Activated T-helper 2 cell treated with anti-CD3 and anti-CD28 coated beads, Interferon-gamma antibody, Interleukin-2, Interleukin-4, amounts not matched to agents 10 μg/mL and 5 μg/mL and 100 μg/mL, durations not matched to agents 14 hours and 24 hours and 36 hours (primary cell): ENCODE measurements at regions of chr17 and their contacts with region 1.

Region 1: DNA sequence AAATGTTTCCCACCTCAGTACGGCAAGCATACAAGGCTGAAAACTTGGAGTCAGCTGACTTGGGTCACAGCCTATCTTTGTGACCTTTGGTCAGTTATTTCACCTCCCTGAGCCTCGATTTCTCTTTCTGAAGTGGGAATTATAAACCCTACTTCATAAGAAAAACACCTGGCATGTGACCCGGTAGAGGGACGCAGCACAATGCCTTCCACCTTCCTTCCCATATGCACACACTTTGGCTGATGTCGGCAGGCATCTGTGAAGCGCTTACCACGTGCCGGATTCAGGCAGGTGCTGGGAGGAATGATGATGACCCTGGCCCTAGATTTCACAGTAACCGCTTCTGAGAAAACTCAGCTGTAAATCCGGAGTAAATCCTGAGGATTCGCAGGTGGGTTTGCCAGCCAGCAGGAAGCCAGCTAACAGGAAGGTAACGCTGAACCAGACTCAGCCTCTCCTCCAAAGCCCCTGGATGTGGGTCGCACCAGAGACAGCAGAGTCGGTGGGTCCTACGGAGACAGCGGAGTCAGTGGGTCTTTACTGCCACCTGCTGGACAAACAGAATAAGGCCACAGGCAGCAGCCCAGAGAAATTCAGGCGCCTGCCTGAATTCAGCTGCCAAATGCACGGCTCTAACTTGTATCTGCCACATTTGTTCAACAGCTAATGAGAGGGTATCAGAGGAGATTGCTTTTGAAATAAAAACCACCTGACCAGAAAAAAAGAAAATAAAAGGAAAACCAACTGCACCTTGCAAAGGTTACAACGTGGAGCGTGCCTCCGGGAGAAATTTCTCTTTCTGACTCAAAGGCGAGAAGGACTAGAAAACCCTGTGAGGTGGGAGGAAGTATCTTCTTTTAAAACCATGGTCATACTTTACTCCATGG is 16.6 kb downstream of the COPRS start:
- DNase-seq: peak; percentile 38
- H3K4me3 Mint-ChIP-seq: no peak overlapping the region
- H3K27ac Mint-ChIP-seq: no peak overlapping the region
- H3K4me1 Mint-ChIP-seq: no peaks in the 10 kb centered on the region
- H3K27me3 Mint-ChIP-seq: peaks cover 5% of the 10 kb centered on the region

Region 2: GRCh38 chr17:31437720-31438420 is 404.6 kb before region 1 on chr17:
- intact Hi-C with region 1: loop called (anchors 5 kb)
- DNase-seq: no peak
- H3K4me3 Mint-ChIP-seq: no peak overlapping the region
- H3K27ac Mint-ChIP-seq: no peak overlapping the region
- H3K4me1 Mint-ChIP-seq: peaks cover 16% of the 10 kb centered on the region
- H3K27me3 Mint-ChIP-seq: peaks cover 27% of the 10 kb centered on the region

Region 3: DNA sequence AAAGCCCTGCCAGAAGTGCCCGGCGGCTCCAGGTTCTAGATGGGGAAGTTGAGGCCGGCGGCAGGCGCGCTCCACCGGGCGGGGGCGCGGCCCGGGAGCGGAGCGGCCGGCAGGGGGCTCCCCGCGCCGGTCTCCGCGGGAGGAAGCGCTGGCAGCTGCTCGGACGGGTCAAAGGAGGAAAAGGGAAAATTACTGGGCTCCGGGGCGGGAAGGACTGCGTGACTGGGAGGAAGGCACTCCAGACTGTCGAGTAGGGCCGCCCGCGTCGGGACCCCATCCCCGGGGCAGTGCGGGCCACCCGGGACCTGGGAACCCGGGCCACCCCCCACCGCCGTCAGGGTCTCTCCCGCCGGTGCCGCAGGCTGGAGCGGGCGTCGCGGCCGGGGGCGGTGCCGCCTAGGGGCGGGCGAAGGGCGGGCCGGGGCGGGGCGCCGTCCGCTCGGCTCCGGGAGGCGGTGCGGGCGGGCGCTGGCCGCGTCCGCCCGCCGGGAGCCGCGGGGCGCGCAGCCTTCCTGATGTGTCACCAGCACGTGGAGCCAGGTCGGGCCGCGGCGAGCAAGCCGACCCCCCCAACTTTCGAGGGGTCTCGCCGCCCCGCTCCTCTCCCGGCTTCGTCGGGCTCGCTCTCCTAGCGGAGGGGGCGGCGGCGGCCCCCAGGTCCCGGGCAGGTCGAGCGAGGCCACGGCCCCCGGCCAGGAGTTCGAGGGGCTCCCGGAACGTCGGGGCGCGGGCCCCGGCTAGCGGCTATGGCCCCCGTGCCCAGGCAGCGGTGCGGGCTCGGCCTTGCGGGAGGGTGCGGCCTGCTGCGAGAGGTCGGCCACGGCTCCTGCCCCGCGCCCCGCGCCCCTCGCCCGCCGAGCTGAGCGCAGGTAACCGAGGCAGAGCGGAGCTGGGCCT is 283.4 kb before region 1 on chr17:
- intact Hi-C with region 1: loop called (anchors 5 kb)
- DNase-seq: peak; percentile 41
- H3K4me3 Mint-ChIP-seq: peak overlapping the region; percentile 70
- H3K27ac Mint-ChIP-seq: no peak overlapping the region
- H3K4me1 Mint-ChIP-seq: peaks cover 13% of the 10 kb centered on the region
- H3K27me3 Mint-ChIP-seq: peaks cover 19% of the 10 kb centered on the region

Region 4: DNA sequence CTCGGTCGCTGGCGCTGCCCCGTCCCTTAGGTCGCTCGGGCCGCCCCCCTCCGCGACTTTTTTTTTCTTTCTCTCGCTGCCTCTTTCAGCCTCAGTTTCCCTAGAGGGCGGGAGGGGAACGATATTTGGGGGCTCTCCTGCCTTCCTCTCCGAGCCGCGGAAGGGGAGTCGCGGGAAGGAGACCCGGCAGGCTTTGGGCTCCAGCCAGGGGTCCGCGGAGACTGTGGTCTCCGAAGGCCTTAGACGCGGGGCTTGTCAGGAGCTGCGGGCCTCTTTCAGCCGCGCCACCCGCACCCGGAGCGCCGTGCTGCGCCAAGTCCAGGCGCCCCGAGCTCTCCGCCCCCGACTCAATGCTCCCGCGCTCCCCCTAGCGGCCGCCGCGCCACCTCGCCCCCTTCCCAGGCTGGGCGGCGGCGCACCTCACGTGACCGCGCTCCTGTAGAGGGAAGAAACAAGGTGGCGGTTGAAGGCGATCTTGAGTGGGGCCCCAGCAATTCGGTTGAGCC is 164.6 kb after region 1 on chr17 and contains the start of gene LRRC37B:
- intact Hi-C with region 1: no loop called
- DNase-seq: peak; percentile 87
- H3K4me3 Mint-ChIP-seq: peak within 1 kb of the TSS; percentile 85
- H3K27ac Mint-ChIP-seq: peak within 1 kb of the TSS; percentile 78
- H3K4me1 Mint-ChIP-seq: peaks cover 32% of the 10 kb centered on the region
- H3K27me3 Mint-ChIP-seq: no peaks in the 10 kb centered on the region
- total RNA-seq, gene LRRC37B: 34.3 and 40.9 TPM in 2 replicates